Activated T-helper 1 cell treated with anti-CD3 and anti-CD28 coated beads, Interleukin-12 subunit alpha, Interleukin-12 subunit beta, Interleukin-2, Interleukin-4 antibody, amounts not matched to agents 30 ng/mL and 10 ng/mL and 1 ng/mL, durations not matched to agents 14 hours and 24 hours and 36 hours (primary cell): ENCODE measurements at regions of chr6 and their contacts with region 1.

Region 1: DNA sequence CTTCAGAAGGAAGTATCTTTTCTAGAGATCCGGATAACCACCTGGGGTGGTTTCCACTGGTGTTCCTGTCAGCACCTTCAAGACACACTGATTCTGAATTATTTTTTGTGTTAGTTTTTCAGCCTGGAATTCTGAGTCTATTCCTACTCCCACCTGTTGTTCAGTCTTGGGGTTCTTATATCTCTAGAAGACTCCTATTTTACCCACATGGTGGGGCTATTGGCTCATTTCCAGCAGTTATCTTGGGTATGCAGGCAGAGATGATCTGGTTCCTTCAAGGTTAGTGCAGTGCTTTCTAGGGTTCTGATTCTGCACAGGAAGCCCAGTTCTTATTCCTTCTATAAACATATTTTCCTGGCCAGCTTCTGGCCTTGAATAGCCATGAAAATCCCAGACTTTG is 175.6 kb upstream of the PDE7B start:
- DNase-seq: peak; percentile 12
- H3K4me3 Mint-ChIP-seq: no peak overlapping the region
- H3K27ac Mint-ChIP-seq: peak overlapping the region; percentile 62
- H3K4me1 Mint-ChIP-seq: peaks cover 49% of the 10 kb centered on the region
- H3K27me3 Mint-ChIP-seq: no peaks in the 10 kb centered on the region

Region 2: DNA sequence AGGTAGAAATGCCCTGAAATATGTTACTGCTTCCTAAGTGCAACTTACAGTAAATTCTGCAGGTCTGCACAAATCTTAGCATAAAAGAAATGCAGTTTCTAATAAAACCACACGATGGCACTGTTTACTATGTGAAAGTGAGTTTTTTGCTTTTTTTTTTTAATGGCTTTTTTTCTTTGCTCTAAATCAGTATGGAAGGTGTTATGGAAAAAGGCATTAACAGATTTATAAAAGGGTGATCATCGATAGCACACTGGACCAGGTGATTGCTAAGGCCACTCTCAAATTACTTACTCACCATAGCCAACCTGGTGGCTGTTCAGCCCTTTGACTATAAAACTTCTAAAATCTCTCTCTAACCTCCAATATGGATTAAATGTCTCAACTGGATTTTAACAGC is 224.2 kb before region 1 on chr6:
- intact Hi-C with region 1: loop called (anchors 5 kb)
- DNase-seq: no peak
- H3K4me3 Mint-ChIP-seq: no peak overlapping the region
- H3K27ac Mint-ChIP-seq: no peak overlapping the region
- H3K4me1 Mint-ChIP-seq: peaks cover 5% of the 10 kb centered on the region
- H3K27me3 Mint-ChIP-seq: no peaks in the 10 kb centered on the region

Region 3: GRCh38 chr6:135506270-135506997 is 169.4 kb before region 1 on chr6:
- intact Hi-C with region 1: loop called (anchors 1 kb)
- DNase-seq: no peak
- H3K4me3 Mint-ChIP-seq: no peak overlapping the region
- H3K27ac Mint-ChIP-seq: no peak overlapping the region
- H3K4me1 Mint-ChIP-seq: peaks cover 11% of the 10 kb centered on the region
- H3K27me3 Mint-ChIP-seq: no peaks in the 10 kb centered on the region

Region 4: GRCh38 chr6:135577059-135577538 is 98.8 kb before region 1 on chr6:
- intact Hi-C with region 1: no loop called
- DNase-seq: no peak
- H3K4me3 Mint-ChIP-seq: peak overlapping the region; percentile 49
- H3K27ac Mint-ChIP-seq: peak overlapping the region; percentile 97
- H3K4me1 Mint-ChIP-seq: peaks cover 48% of the 10 kb centered on the region
- H3K27me3 Mint-ChIP-seq: no peaks in the 10 kb centered on the region

Region 5: GRCh38 chr6:135651964-135652755 is 23.7 kb before region 1 on chr6:
- intact Hi-C with region 1: loop called (anchors 2 kb)
- DNase-seq: no peak
- H3K4me3 Mint-ChIP-seq: peak overlapping the region; percentile 57
- H3K27ac Mint-ChIP-seq: peak overlapping the region; percentile 91
- H3K4me1 Mint-ChIP-seq: peaks cover 44% of the 10 kb centered on the region
- H3K27me3 Mint-ChIP-seq: no peaks in the 10 kb centered on the region

Region 6: DNA sequence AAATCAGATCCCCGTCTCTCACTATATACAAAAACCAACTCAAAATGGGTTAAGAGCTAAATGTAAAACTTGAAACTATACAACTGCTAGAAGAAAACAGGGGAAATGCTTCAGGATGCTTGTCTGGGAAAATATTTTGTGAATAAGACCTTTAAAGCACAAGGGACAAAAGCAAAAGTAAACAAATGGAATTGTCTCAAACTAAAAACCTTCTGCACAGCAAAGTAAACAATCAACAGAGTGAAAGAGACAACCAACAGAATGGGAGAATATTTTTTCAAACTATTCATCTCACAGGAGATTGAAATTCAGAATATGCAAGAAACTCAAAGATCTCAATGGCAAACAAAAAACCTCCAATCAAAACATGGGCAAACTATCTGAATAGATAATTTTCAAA is 12.8 kb before region 1 on chr6:
- intact Hi-C with region 1: no loop called
- DNase-seq: no peak
- H3K4me3 Mint-ChIP-seq: no peak overlapping the region
- H3K27ac Mint-ChIP-seq: no peak overlapping the region
- H3K4me1 Mint-ChIP-seq: peaks cover 17% of the 10 kb centered on the region
- H3K27me3 Mint-ChIP-seq: peaks cover 4% of the 10 kb centered on the region

Region 7: DNA sequence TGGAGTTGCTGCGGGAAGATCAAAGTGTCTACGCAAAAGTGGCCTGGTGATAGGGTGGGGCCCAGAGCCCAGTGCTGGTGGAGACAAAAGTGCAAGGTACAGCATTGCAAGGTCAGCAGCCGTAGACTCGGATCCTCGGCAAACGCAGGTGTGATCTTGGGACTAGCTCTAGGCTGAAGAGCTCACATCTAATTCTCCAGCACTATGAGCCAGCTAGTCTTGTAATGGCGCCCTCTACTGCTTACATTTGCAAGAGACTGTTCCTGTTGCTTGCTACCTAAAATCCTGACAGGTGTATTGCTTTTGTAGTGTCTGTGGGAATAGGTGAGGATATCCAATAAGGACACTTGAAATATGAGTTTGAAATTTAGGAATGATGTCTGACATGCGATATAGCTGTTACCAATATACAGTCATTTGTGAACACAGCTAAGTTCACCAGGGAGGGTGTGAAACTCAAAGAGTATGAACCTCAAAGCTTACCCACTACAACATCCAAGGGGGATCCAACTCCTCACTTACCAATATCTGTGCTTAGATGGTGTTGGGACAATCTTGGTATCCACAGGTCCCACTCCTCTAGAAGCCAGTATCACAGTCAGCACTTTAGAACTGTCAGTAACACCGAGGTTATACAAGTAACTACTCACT is 234.0 kb after region 1 on chr6:
- intact Hi-C with region 1: loop called (anchors 1 kb)
- DNase-seq: peak; percentile 49
- H3K4me3 Mint-ChIP-seq: no peak overlapping the region
- H3K27ac Mint-ChIP-seq: peak overlapping the region; percentile 24
- H3K4me1 Mint-ChIP-seq: peaks cover 30% of the 10 kb centered on the region
- H3K27me3 Mint-ChIP-seq: no peaks in the 10 kb centered on the region

Region 8: DNA sequence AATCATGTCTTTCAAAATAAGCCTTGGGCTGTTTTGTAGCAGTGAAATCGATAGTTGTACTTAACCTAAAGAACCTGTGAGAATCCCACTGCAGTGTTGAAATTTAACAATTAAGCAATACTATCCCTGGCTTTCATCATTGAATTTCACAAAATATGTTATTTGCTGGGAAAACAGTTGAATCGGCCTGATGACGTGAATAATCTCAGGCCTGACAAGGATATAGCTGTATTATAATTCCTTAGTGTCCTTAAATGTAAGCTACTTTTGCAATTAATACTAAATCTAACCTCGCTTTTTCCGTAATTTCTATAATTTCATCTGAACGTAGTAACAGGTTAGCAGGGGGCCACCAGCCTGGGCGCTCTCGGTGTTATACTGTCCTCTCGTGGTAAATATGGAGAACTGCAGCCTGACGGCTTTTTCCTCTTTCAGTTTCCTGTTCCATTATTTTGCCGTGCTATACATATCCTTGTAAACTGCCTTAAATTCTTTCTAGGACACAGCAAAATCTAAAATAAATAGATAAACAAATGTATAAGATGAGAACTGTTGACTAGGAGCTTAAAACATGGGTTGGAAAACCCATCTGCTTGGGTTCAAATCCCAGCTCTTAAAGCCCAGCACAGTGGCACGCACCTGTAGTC is 550.3 kb after region 1 on chr6:
- intact Hi-C with region 1: loop called (anchors 1 kb)
- DNase-seq: peak; percentile 35
- H3K4me3 Mint-ChIP-seq: peak overlapping the region; percentile 0
- H3K27ac Mint-ChIP-seq: peak overlapping the region; percentile 25
- H3K4me1 Mint-ChIP-seq: peaks cover 27% of the 10 kb centered on the region
- H3K27me3 Mint-ChIP-seq: no peaks in the 10 kb centered on the region

Region 9: DNA sequence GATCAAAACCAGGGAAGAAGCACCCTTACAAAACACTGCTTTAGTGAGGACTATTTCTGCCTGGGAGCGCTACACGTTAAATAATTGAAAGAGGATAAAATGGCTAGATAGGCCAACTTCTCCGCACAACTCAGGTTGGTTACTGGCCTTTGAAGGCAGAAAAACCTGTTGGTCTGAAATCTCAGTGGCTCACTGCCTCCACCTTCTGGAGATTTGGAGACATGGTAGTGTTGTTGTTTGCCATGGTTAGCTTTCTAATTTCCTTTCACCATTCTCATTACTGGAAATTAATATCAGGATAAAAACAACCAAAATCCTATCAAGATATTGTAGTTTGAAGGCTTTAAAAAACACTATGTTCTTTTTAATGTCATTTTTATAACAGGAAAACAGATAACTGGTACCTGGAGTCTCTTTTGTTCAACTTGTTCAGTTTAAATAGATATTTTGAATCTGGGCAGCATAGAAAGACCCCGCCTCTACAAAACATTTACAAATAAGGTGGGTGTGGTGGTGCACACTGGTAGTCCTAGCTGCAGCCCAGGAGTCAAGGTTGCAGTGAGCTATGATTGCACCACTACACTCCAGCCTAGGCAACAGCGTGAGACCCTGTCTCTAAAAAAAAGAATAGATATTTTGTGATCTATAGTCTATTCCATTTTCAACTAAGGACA is 641.3 kb after region 1 on chr6:
- intact Hi-C with region 1: loop called (anchors 1 kb)
- DNase-seq: peak; percentile 41
- H3K4me3 Mint-ChIP-seq: no peak overlapping the region
- H3K27ac Mint-ChIP-seq: no peak overlapping the region
- H3K4me1 Mint-ChIP-seq: no peaks in the 10 kb centered on the region
- H3K27me3 Mint-ChIP-seq: peaks cover 9% of the 10 kb centered on the region